HepG2 (cell line): ENCODE measurements at regions of chr3 and their contacts with region 1.

Region 1: DNA sequence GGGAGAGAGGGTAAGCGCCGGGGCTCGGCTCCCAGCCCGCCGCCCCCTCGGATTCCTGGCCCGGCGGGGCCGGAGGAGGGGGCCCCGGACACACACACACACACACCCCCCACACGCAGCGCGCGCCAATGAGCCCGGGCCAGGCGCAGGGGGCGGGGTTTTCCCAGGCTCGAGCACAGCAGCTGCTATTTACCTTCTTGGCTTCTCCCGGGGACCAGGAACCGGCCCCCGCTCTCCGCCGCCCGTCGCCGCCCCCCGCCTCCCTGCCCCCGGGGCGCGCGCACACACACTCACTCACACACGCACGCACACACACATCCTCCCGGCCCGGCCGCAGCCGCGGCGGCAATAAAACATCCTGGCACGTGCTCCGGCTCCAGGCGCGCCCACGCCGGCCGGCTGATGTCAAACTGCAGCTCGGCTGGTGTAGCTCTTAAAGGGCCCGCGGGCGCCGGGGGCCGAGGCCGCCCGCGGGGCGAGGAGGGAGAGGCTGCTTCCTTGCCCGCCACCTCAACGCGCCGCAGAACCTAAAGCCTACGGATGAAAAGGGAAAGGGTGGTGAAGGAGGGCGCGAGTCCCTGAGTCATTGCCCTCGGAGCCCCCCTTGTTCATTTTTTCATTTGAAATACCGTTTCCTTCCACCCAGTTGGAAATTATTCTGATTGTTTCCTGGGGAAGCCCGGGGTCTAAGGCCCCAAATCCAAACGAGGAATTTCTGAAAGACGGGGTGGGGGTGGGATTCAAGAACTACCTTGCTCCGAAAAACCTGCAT is 1.0 kb upstream of the HES1 start:
- DNase-seq: peak; percentile 93
- ATAC-seq: peak; percentile 55
- H3K4me3 ChIP-seq: peak overlapping the region; percentile 57 to 70 (median 67)
- H3K27ac ChIP-seq: peak overlapping the region; percentile 94
- H3K4me1 ChIP-seq: peaks cover 64% of the 10 kb centered on the region
- H3K27me3 ChIP-seq: no peaks in the 10 kb centered on the region; a peak in 1 of 5 replicates
- CTCF ChIP-seq: no peak
- EP300 ChIP-seq: peak; percentile 55 to 75; a peak in 3 of 4 replicates
- POLR2A ChIP-seq: no peak
- RAD21 ChIP-seq: no peak

Region 2: DNA sequence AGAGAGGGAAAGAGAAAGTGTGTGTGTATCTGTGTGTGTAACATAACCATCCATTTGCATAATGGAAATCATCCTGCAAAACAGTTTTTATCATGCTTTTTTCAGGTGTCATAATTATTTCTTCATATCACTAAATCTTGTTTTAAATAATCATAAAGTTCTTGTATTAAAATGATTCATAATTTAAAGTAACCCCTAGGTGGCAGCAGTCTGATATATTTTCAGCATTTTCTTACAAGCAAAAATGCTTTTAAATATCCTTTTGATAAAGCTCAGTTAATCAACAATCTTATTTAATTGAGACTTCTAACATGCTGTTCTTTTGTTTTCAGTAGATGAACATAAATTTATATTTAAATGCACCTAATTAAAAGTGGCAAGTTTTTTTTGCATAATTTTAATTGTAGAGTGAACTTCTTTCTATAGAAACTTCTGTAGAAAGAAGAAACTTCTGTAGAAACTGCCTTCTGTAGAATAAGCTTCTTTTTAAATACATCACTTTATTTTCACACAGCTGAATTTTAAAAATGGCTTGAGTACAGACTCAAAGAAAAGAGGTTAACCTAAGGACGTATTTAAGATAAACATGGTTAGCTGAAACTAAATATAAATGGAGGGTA is 469.5 kb before region 1 on chr3:
- CTCF ChIA-PET with region 1: no interaction called
- POLR2A ChIA-PET with region 1: interaction called, 3 read pairs
- in situ Hi-C with region 1: no loop called
- intact Hi-C with region 1: loop called (anchors 10 kb)
- DNase-seq: peak; percentile 25
- ATAC-seq: no peak
- H3K4me3 ChIP-seq: no peak overlapping the region
- H3K27ac ChIP-seq: no peak overlapping the region
- H3K4me1 ChIP-seq: peaks cover 14% of the 10 kb centered on the region; the same call in 1 of the 2 replicates
- H3K27me3 ChIP-seq: no peaks in the 10 kb centered on the region
- CTCF ChIP-seq: peak; percentile 34
- EP300 ChIP-seq: no peak
- POLR2A ChIP-seq: no peak
- RAD21 ChIP-seq: no peak

Region 3: DNA sequence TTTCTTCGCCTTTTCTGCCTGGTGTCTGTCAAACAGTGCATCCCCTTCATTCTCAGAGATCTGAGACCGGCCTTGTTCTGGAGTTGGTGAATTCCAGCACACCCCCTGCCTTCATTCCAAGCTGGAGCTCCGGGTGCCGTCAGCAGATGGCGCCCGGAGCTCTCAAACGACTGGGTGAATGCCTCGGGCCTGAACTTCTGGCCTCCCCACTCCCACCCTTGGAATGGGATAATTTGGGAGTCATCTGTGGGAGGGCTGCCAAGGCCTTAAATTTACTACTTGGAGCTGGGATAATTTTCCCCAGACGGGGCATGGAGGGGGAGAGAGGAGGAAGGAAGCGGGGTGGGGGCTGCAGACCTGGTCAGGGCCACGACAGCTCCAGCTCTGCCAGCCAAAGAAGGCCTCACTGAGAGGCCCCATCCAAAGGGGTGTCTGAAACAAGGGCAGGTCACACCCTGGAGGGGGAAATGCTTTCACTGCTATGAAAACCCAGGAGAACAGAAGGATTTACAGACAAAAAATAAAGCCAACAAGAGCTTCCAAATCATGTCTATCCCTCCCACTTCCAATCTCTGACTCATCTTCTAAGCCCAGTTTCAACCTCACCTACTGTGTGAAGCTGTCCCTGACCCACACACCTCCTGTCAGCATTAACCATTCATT is 354.0 kb before region 1 on chr3:
- CTCF ChIA-PET with region 1: interaction called, 8 read pairs
- POLR2A ChIA-PET with region 1: interaction called, 4 read pairs
- in situ Hi-C with region 1: loop called (anchors 5 kb)
- intact Hi-C with region 1: no loop called
- DNase-seq: peak; percentile 44
- ATAC-seq: peak; percentile 88
- H3K4me3 ChIP-seq: no peak overlapping the region; a peak in 1 of 6 replicates
- H3K27ac ChIP-seq: no peak overlapping the region
- H3K4me1 ChIP-seq: peaks cover 72% of the 10 kb centered on the region
- H3K27me3 ChIP-seq: peaks cover 0 to 20% of the 10 kb centered on the region in 2 experiments; a peak in 4 of 5 replicates
- CTCF ChIP-seq: peak; percentile 79
- EP300 ChIP-seq: no peak
- POLR2A ChIP-seq: no peak
- RAD21 ChIP-seq: peak; percentile 89

Region 4: DNA sequence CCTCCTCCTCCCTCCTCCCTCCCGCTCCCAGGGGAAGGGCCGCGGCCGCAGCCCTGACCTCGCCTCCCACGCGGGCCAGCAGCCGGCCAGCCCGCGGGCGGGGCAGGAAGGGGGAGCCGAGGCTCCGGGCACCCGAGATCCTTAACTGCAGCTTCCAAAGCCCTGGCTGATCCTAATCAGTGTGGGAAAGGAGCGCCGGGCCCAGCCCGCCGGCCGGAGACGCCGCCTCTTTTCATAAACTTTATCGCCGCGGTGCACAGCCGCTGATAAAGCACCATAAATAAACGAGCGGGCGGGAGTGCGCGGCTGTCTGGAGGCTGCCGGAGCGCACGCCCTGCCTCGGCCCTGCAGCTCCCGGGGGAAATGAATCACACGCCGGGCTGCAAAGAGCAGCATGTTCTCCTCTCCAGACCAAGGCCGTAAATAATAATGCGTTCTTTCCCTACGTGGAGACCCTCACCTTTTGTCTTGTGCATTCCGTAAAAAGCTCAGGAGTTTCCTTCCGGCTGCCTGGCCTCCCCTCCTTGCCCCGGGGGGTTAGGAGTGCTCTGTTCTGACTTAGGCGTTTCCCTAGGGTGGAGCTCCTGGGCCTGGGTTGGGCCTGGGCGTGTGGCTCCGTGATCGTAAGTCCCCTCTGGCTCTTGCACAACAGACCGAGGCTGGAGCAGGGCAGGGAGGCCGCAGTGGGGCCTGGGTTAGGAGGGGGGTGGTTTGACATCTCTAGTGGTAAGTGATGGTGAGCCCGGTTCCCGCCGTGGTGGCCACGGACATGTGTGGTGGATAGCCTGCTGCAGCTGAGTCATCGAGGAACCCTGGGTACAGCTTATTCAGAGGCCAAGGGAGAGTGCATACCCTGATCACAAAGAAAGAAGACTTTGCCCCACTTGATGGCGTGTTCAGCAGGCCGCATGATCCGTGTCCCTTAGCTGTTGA is 131.6 kb before region 1 on chr3:
- CTCF ChIA-PET with region 1: no interaction called
- POLR2A ChIA-PET with region 1: interaction called, 27 read pairs
- in situ Hi-C with region 1: no loop called
- intact Hi-C with region 1: loop called (anchors 2 kb)
- DNase-seq: peak; percentile 47
- ATAC-seq: peak; percentile 89
- H3K4me3 ChIP-seq: peak overlapping the region; percentile 54 to 68 (median 55)
- H3K27ac ChIP-seq: peak overlapping the region; percentile 31
- H3K4me1 ChIP-seq: peaks cover 43% of the 10 kb centered on the region
- H3K27me3 ChIP-seq: peaks cover 0 to 10% of the 10 kb centered on the region in 2 experiments; a peak in 1 of 5 replicates
- CTCF ChIP-seq: no peak
- EP300 ChIP-seq: no peak
- POLR2A ChIP-seq: no peak
- RAD21 ChIP-seq: no peak

Region 5: GRCh38 chr3:194075802-194076460 is 59.0 kb before region 1 on chr3:
- CTCF ChIA-PET with region 1: interaction called, 3 read pairs
- POLR2A ChIA-PET with region 1: interaction called, 128 read pairs
- in situ Hi-C with region 1: loop called (anchors 10 kb)
- intact Hi-C with region 1: loop called (anchors 2 kb)
- DNase-seq: peak; percentile 86
- ATAC-seq: peak; percentile 94
- H3K4me3 ChIP-seq: peak overlapping the region in 2 of 3 experiments; percentile 4 to 19; a peak in 2 of 6 replicates
- H3K27ac ChIP-seq: peak overlapping the region; percentile 45
- H3K4me1 ChIP-seq: peaks cover 66% of the 10 kb centered on the region
- H3K27me3 ChIP-seq: no peaks in the 10 kb centered on the region; a peak in 2 of 5 replicates
- CTCF ChIP-seq: peak; percentile 80
- EP300 ChIP-seq: peak in 1 of 2 experiments; percentile 78; a peak in 2 of 4 replicates
- POLR2A ChIP-seq: no peak
- RAD21 ChIP-seq: peak; percentile 61; the same call in 1 of the 2 replicates

Region 6: DNA sequence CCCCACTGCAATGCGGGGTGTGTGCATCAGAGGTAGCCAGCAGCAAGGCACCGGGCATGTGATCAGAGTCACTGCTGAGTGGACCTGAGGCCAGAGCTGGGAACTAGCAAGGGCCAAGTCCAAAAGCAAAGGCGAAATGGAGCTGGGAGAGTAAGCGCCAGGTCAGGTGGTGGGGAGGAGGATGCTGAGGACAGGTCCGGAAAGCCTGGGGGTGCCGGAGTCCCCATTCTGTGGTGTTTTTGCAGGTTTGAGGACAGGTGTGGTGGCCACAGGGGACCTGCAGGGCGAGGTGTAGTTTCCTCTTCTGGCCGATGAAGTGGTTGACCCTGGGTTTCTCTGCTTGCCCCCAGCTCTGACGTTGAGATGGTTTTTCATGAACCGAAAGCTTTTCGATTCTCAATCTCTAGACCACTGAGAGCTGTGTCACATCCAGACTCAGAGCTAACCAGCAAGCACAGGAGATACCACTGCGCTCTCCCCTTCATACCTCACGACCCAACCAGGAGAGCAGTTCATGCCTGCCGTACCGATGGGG is 34.0 kb before region 1 on chr3:
- CTCF ChIA-PET with region 1: no interaction called
- POLR2A ChIA-PET with region 1: interaction called, 92 read pairs
- in situ Hi-C with region 1: no loop called
- intact Hi-C with region 1: no loop called
- DNase-seq: no peak
- ATAC-seq: peak; percentile 25
- H3K4me3 ChIP-seq: peak overlapping the region in 2 of 3 experiments; percentile 31 to 46; a peak in 4 of 6 replicates
- H3K27ac ChIP-seq: peak overlapping the region; percentile 55
- H3K4me1 ChIP-seq: peaks cover 80% of the 10 kb centered on the region
- H3K27me3 ChIP-seq: no peaks in the 10 kb centered on the region
- CTCF ChIP-seq: no peak
- EP300 ChIP-seq: no peak
- POLR2A ChIP-seq: no peak
- RAD21 ChIP-seq: no peak

Region 7: GRCh38 chr3:194315088-194315964 is 180.4 kb after region 1 on chr3:
- CTCF ChIA-PET with region 1: no interaction called
- POLR2A ChIA-PET with region 1: interaction called, 3 read pairs
- in situ Hi-C with region 1: loop called (anchors 5 kb)
- intact Hi-C with region 1: loop called (anchors 1 kb)
- DNase-seq: peak; percentile 50
- ATAC-seq: peak; percentile 85
- H3K4me3 ChIP-seq: peak overlapping the region; percentile 52 to 75 (median 56); a peak in 5 of 6 replicates
- H3K27ac ChIP-seq: no peak overlapping the region
- H3K4me1 ChIP-seq: peaks cover 54% of the 10 kb centered on the region
- H3K27me3 ChIP-seq: peaks cover 2 to 23% of the 10 kb centered on the region in 2 experiments; a peak in 4 of 5 replicates
- CTCF ChIP-seq: peak; percentile 94
- EP300 ChIP-seq: no peak
- POLR2A ChIP-seq: no peak
- RAD21 ChIP-seq: peak; percentile 99